Astrocyte of the spinal cord (primary cell): ENCODE measurements at regions of chr4 and their contacts with region 1.

Region 1: DNA sequence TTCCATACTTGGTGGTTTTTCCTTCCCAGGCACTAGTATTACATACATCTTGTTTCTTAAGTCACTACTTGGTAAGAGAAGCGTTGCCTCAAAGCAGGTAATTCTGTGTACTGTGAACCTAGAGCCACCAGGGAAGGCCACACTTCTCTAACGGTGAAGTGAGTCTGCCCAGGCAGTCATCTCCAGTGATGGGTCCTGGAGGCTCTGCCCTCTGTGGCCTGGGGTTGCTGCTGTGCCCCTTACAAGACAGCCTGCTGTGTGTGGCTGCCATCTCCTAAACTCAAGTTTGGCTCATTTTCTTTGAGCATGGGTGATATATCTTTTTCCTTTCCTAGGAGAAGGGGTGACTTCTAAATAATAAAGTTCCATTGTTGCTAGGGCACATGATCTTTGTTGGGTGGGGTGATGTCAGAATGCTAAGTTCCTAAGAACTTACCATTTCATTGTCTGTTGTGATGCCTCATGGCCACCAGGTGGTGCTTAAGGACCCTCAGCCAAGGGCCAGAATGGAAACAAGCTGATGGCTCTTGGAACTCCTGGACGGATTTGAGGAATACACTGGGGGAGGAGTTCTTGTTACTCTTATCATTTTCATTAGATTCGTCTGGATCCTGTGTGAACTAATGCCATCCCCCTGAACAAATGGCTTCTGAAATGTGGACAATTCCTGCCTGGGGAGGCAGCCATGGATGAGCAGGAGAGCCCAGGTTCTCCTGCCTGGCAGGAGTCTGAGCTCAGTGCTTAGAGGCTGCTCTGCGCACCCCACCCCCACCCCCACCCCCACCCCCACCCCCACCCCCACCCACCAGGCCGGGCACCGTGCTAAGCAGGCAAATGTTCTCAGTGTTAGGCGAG is 41.1 kb upstream of the WDR1 start:
- DNase-seq: peak; percentile 68
- H3K4me3 ChIP-seq: no peak overlapping the region
- CTCF ChIP-seq: peak; percentile 81

Region 2: GRCh38 chr4:10530137-10530786 is 372.6 kb after region 1 on chr4:
- in situ Hi-C with region 1: loop called (anchors 25 kb)
- DNase-seq: peak; percentile 16
- H3K4me3 ChIP-seq: no peak overlapping the region
- CTCF ChIP-seq: no peak